ENCODE measurements at regions of chr12 and their contacts with region 1.

Region 1: GRCh38 chr12:57135527-57136326 is 7.4 kb downstream of the LRP1 start:
- DNase-seq: peak in 1 of 2 donors; percentile 90
- H3K4me3 ChIP-seq: peak overlapping the region in 3 of 4 donors; percentile 9 to 17 (median 13)
- H3K27ac ChIP-seq: peak overlapping the region; percentile 33 to 98 (median 96)
- H3K4me1 ChIP-seq: peaks cover 47 to 86% (median 66%) of the 10 kb centered on the region in 4 donors
- H3K27me3 ChIP-seq: no peaks in the 10 kb centered on the region
- CTCF ChIP-seq: no peak
- EP300 ChIP-seq: no peak
- POLR2A ChIP-seq: no peak

Region 2: DNA sequence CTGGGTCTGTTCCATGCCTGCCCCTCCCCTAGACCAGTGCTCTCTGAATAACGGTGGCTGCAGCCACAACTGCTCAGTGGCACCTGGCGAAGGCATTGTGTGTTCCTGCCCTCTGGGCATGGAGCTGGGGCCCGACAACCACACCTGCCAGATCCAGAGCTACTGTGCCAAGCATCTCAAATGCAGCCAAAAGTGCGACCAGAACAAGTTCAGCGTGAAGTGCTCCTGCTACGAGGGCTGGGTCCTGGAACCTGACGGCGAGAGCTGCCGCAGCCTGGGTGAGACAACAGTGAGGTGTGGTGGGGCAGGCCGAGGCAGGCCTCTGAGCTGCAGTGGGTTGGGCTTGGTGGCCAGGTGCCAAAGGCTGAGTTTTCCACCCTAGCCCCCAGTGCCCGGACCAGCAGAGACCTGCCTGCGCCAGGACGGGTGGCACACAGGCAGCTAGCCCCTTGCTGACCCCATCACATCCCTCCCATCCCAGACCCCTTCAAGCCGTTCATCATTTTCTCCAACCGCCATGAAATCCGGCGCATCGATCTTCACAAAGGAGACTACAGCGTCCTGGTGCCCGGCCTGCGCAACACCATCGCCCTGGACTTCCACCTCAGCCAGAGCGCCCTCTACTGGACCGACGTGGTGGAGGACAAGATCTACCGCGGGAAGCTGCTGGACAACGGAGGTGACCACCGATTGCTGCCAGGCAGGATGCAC is 39.9 kb after region 1 on chr12:
- intact Hi-C with region 1: loop called (anchors 5 kb)
- DNase-seq: peak; percentile 86 to 87
- H3K4me3 ChIP-seq: no peak overlapping the region
- H3K27ac ChIP-seq: peak overlapping the region in 2 of 5 donors; percentile 49 to 70
- H3K4me1 ChIP-seq: peaks cover 6 to 16% (median 8%) of the 10 kb centered on the region in 4 donors
- H3K27me3 ChIP-seq: no peaks in the 10 kb centered on the region
- CTCF ChIP-seq: peak in 5 of 7 experiments; percentile 47 to 72 (median 65)
- EP300 ChIP-seq: no peak
- POLR2A ChIP-seq: no peak

Measured in stomach (tissue), 19 donors.